Activated CD4-positive, alpha-beta T cell treated with anti-CD3 and anti-CD28 coated beads for 36 hours (primary cell): ENCODE measurements at regions of chr18 and their contacts with region 1.

Region 1: DNA sequence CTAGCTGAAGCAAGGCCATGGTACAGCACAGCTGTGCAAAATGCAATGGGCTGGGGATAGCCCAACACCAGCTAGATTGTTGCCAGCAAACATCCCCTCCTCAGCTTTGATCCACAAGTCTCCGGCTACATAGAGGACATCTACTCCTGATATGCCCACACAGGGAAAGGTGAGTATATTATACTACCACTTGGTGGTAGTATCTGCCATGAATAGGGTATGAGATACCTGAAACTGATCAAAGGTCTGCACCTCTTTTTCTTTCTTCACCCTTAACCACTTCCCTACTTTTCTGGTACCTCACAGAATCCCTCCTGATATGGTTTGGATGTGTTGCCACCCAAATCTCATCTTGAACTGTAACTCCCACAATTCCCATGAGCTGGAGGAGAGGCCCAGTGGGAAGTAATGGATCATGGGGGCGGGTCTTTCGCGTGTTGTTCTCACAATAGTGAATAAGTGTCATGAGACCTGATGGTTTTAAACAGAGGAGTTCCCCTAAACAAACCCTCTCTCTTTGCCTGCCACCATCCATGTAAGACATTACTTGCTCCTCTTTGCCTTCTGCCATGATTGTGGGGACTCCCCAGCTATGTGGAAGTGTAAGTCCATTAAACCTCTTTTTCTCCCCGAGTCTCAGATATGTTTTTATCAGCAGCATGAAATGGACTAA is 279.6 kb downstream of the TXNL1 start:
- DNase-seq: no peak
- ATAC-seq: no peak
- H3K4me3 Mint-ChIP-seq: no peak overlapping the region
- H3K27ac Mint-ChIP-seq: no peak overlapping the region
- H3K4me1 Mint-ChIP-seq: no peaks in the 10 kb centered on the region
- H3K27me3 Mint-ChIP-seq: no peaks in the 10 kb centered on the region

Region 2: GRCh38 chr18:56413862-56414261 is 55.1 kb after region 1 on chr18:
- CTCF ChIA-PET with region 1: no interaction called
- POLR2A ChIA-PET with region 1: no interaction called
- intact Hi-C with region 1: loop called in 1 of 2 experiments (anchors 10 kb)
- DNase-seq: no peak
- ATAC-seq: no peak
- H3K4me3 Mint-ChIP-seq: no peak overlapping the region
- H3K27ac Mint-ChIP-seq: no peak overlapping the region
- H3K4me1 Mint-ChIP-seq: no peaks in the 10 kb centered on the region
- H3K27me3 Mint-ChIP-seq: no peaks in the 10 kb centered on the region

Region 3: GRCh38 chr18:56575819-56576663 is 217.3 kb after region 1 on chr18:
- CTCF ChIA-PET with region 1: no interaction called
- POLR2A ChIA-PET with region 1: no interaction called
- intact Hi-C with region 1: loop called in 1 of 2 experiments (anchors 10 kb)
- DNase-seq: no peak
- ATAC-seq: no peak
- H3K4me3 Mint-ChIP-seq: no peak overlapping the region
- H3K27ac Mint-ChIP-seq: no peak overlapping the region
- H3K4me1 Mint-ChIP-seq: no peaks in the 10 kb centered on the region
- H3K27me3 Mint-ChIP-seq: peaks cover 11% of the 10 kb centered on the region